Prostate gland (tissue), 2 donors: ENCODE measurements at regions of chr12 and their contacts with region 1.

Region 1: DNA sequence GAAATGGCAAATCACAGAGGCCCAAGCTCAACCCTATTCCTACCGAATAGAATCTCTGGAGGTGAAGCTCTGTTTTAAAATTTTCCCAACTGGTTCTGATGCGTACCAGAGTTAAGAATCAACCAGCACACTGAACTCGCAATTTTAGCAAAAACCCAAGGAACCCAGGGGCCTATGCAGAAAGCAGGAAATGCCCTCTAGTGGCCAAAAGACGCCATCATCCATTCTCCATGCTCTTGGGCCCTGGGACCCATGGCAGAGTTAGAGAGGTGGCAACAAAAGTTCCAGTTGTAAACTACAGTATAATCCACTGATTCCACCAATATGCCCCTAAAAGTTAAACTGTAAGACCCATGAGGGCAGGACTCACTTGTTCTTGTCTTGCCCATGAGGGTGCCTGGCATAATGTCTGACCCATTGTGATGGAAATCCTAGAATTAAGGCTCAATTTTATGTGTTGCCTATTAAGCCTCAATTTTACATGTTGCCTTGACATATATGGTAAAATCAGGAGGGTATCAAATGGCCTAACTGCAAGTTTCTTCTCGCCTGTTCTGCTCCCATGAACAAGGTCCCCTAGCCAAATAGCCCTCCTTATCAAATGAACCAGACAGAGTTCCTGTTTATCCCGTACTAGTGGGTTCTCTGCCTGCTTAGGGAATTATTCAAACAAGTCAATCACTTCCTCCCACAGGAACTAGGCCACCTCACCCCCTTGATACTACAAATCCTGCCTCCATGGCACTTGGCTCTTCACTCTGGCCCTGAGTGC is 137.5 kb upstream of the CPM start:
- DNase-seq: peak; percentile 68
- H3K4me3 ChIP-seq: no peak overlapping the region
- H3K27ac ChIP-seq: no peak overlapping the region
- H3K4me1 ChIP-seq: no peaks in the 10 kb centered on the region
- H3K27me3 ChIP-seq: no peaks in the 10 kb centered on the region
- CTCF ChIP-seq: peak; percentile 75 to 89 (median 76)
- POLR2A ChIP-seq: no peak

Region 2: GRCh38 chr12:68514807-68515410 is 555.6 kb before region 1 on chr12:
- intact Hi-C with region 1: no loop called
- DNase-seq: no peak
- H3K4me3 ChIP-seq: no peak overlapping the region
- H3K27ac ChIP-seq: no peak overlapping the region
- H3K4me1 ChIP-seq: no peaks in the 10 kb centered on the region
- H3K27me3 ChIP-seq: no peaks in the 10 kb centered on the region
- CTCF ChIP-seq: no peak
- POLR2A ChIP-seq: no peak

Region 3: GRCh38 chr12:68866950-68867349 is 203.6 kb before region 1 on chr12:
- intact Hi-C with region 1: loop called (anchors 2 kb)
- DNase-seq: no peak
- H3K4me3 ChIP-seq: no peak overlapping the region
- H3K27ac ChIP-seq: no peak overlapping the region
- H3K4me1 ChIP-seq: no peaks in the 10 kb centered on the region
- H3K27me3 ChIP-seq: no peaks in the 10 kb centered on the region
- CTCF ChIP-seq: no peak
- POLR2A ChIP-seq: no peak

Region 4: GRCh38 chr12:68932961-68933893 is 137.3 kb before region 1 on chr12 and contains the start of gene CPM:
- intact Hi-C with region 1: loop called (anchors 5 kb)
- DNase-seq: peak; percentile 75
- H3K4me3 ChIP-seq: peak within 1 kb of the TSS; percentile 47 to 60
- H3K27ac ChIP-seq: peak within 1 kb of the TSS; percentile 28 to 67
- H3K4me1 ChIP-seq: no peaks in the 10 kb centered on the region
- H3K27me3 ChIP-seq: no peaks in the 10 kb centered on the region
- CTCF ChIP-seq: peak in 2 of 4 experiments; percentile 10 to 14
- POLR2A ChIP-seq: peak; percentile 89
- total RNA-seq, gene CPM: 68.4 TPM

Region 5: DNA sequence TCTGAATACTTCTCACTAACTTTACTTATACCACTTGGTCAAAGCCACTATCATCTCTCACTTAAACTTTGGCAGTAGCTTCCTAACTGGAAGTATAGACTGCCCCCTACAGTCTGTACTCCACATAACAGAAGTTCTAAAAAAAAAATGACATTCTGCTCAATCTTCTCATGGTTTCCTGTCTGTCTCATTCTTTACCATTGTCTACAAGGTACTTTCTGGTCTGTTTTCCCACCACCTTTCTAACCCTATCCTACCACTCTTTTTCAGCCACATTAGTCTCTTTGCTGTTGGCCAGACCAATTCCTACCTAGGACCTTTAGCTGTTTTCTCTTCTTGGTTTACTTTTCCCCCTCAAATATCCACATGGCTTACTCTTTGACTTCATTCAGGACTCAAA is 183.5 kb after region 1 on chr12:
- intact Hi-C with region 1: no loop called
- DNase-seq: no peak
- H3K4me3 ChIP-seq: no peak overlapping the region
- H3K27ac ChIP-seq: no peak overlapping the region
- H3K4me1 ChIP-seq: no peaks in the 10 kb centered on the region
- H3K27me3 ChIP-seq: no peaks in the 10 kb centered on the region
- CTCF ChIP-seq: peak; percentile 11 to 54 (median 48)
- POLR2A ChIP-seq: no peak